ENCODE measurements at regions of chr10 and their contacts with region 1.

Region 1: GRCh38 chr10:10872035-10872673 is 145.5 kb upstream of the CELF2 start:
- DNase-seq: peak in 1 of 2 donors; percentile 55
- ATAC-seq: peak; percentile 89
- H3K4me3 ChIP-seq: no peak overlapping the region
- H3K27ac ChIP-seq: peak overlapping the region; percentile 51 to 85
- H3K4me1 ChIP-seq: peaks cover 5% of the 10 kb centered on the region in 2 donors
- H3K27me3 ChIP-seq: no peaks in the 10 kb centered on the region

Region 2: GRCh38 chr10:10798102-10798863 is 73.9 kb before region 1 on chr10:
- intact Hi-C with region 1: loop called (anchors 2 to 5 kb)
- DNase-seq: peak in 1 of 2 donors; percentile 77
- ATAC-seq: peak; percentile 68
- H3K4me3 ChIP-seq: peak overlapping the region; percentile 22 to 55
- H3K27ac ChIP-seq: peak overlapping the region; percentile 92 to 94
- H3K4me1 ChIP-seq: peaks cover 2 to 9% of the 10 kb centered on the region in 2 donors
- H3K27me3 ChIP-seq: no peaks in the 10 kb centered on the region

Region 3: GRCh38 chr10:10804998-10805740 is 67.0 kb before region 1 on chr10:
- intact Hi-C with region 1: loop called in 1 of 2 experiments (anchors 5 kb)
- DNase-seq: no peak
- ATAC-seq: no peak
- H3K4me3 ChIP-seq: no peak overlapping the region
- H3K27ac ChIP-seq: peak overlapping the region in 1 of 2 donors; percentile 68
- H3K4me1 ChIP-seq: peaks cover 13 to 14% of the 10 kb centered on the region in 2 donors
- H3K27me3 ChIP-seq: no peaks in the 10 kb centered on the region

Region 4: GRCh38 chr10:10831085-10831484 is 41.1 kb before region 1 on chr10:
- intact Hi-C with region 1: loop called (anchors 2 to 5 kb)
- DNase-seq: peak; percentile 82 to 84
- ATAC-seq: peak; percentile 79
- H3K4me3 ChIP-seq: no peak overlapping the region
- H3K27ac ChIP-seq: peak overlapping the region; percentile 72 to 92
- H3K4me1 ChIP-seq: peaks cover 0 to 3% of the 10 kb centered on the region in 2 donors
- H3K27me3 ChIP-seq: no peaks in the 10 kb centered on the region

Region 5: GRCh38 chr10:10911471-10911921 is 39.3 kb after region 1 on chr10:
- intact Hi-C with region 1: loop called (anchors 5 kb)
- DNase-seq: peak; percentile 88 to 93
- ATAC-seq: peak; percentile 88
- H3K4me3 ChIP-seq: no peak overlapping the region
- H3K27ac ChIP-seq: peak overlapping the region; percentile 28 to 79
- H3K4me1 ChIP-seq: peaks cover 0 to 2% of the 10 kb centered on the region in 2 donors
- H3K27me3 ChIP-seq: no peaks in the 10 kb centered on the region

Region 6: DNA sequence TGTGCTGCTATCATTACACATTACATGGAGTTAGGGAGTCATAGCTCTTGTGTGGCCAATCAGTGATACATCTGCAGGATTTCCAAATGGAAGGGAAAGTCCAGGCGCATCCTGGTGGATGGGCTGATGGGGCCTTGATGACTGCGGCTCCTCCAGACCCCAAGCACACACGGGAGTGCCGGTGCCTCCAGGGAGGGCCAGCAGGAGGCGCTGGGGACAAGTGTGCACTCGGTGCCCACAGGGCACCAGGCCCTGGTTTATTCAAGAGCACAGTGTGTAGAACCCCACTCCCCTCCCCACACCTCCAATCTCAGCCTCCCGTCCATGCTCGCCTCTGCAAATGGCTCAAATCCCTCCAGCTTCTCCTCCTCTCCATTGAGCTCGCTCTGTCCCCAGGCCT is 495.4 kb after region 1 on chr10:
- intact Hi-C with region 1: no loop called
- DNase-seq: no peak
- ATAC-seq: no peak
- H3K4me3 ChIP-seq: no peak overlapping the region
- H3K27ac ChIP-seq: no peak overlapping the region
- H3K4me1 ChIP-seq: no peaks in the 10 kb centered on the region
- H3K27me3 ChIP-seq: no peaks in the 10 kb centered on the region

Measured in aorta (tissue), 5 donors.